Sigmoid colon (tissue), 7 donors: ENCODE measurements at regions of chr12 and their contacts with region 1.

Region 1: GRCh38 chr12:810671-811415 is 58.5 kb downstream of the WNK1 start:
- DNase-seq: no peak
- H3K4me3 ChIP-seq: no peak overlapping the region
- H3K27ac ChIP-seq: no peak overlapping the region
- H3K4me1 ChIP-seq: peaks cover 0 to 48% (median 39%) of the 10 kb centered on the region in 4 donors
- H3K27me3 ChIP-seq: no peaks in the 10 kb centered on the region
- CTCF ChIP-seq: no peak
- EP300 ChIP-seq: no peak
- POLR2A ChIP-seq: no peak

Region 2: GRCh38 chr12:569803-570434 is 240.9 kb before region 1 on chr12:
- intact Hi-C with region 1: loop called (anchors 2 kb)
- DNase-seq: peak; percentile 93
- H3K4me3 ChIP-seq: peak overlapping the region; percentile 49 to 67 (median 62)
- H3K27ac ChIP-seq: peak overlapping the region; percentile 88 to 91 (median 90)
- H3K4me1 ChIP-seq: peaks cover 0 to 32% (median 24%) of the 10 kb centered on the region in 4 donors
- H3K27me3 ChIP-seq: no peaks in the 10 kb centered on the region
- CTCF ChIP-seq: peak; percentile 84 to 94 (median 90)
- EP300 ChIP-seq: no peak
- POLR2A ChIP-seq: no peak

Region 3: GRCh38 chr12:575948-576612 is 234.8 kb before region 1 on chr12:
- intact Hi-C with region 1: loop called (anchors 1 kb)
- DNase-seq: peak; percentile 87
- H3K4me3 ChIP-seq: peak overlapping the region in 2 of 4 donors; percentile 12 to 13
- H3K27ac ChIP-seq: peak overlapping the region; percentile 52 to 64 (median 64)
- H3K4me1 ChIP-seq: peaks cover 0 to 34% (median 30%) of the 10 kb centered on the region in 4 donors
- H3K27me3 ChIP-seq: no peaks in the 10 kb centered on the region
- CTCF ChIP-seq: peak; percentile 94 to 99 (median 97)
- EP300 ChIP-seq: no peak
- POLR2A ChIP-seq: no peak

Region 4: GRCh38 chr12:724194-724855 is 86.5 kb before region 1 on chr12:
- intact Hi-C with region 1: no loop called
- DNase-seq: no peak
- H3K4me3 ChIP-seq: no peak overlapping the region
- H3K27ac ChIP-seq: no peak overlapping the region
- H3K4me1 ChIP-seq: peaks cover 0 to 11% (median 4%) of the 10 kb centered on the region in 4 donors
- H3K27me3 ChIP-seq: no peaks in the 10 kb centered on the region
- CTCF ChIP-seq: no peak
- EP300 ChIP-seq: no peak
- POLR2A ChIP-seq: no peak